GM12878 (cell line): ENCODE measurements at regions of chrX and their contacts with region 1.

Region 1: DNA sequence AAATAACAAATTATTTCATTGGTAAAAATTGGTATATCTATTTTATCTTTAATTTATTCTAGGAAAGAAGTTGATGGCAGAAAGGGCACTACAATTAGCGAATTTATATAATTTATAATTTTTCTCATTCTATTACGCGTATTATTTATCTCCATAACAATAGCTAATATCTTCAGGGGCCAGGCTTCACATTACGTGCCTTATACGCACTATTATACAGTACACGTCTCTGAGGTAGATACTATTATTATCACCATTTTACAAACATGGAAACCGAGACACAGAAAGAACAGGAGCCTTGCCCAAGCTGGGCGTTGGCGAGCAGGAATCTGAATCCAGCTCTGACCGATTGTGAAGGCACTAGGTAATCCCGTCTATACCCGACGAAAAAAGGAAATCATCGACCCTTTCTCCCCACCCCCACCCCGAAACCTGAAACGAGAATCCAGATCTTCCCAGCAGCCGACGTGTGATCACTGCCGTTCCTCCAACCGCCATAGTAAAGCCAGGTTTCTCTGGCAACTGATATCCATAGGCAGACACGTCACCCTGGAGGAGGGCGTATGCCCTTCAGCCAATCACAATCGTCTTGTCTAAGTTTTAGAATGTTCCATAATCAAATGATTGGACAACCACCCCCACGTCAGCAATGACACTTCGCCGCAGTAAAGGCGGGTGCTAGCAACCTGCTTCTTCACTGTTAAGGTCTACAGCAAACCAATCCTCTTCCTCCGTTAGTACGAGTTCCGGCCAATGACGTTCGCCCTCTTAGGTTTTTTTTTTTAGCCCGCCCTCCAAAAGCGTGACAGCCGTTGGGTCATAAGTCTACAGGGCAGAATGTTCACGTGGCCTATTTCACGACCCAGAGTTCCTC is at the start of gene MORF4L2:
- DNase-seq: peak; percentile 95
- ATAC-seq: peak; percentile 91
- H3K4me3 ChIP-seq: peak within 1 kb of the TSS; percentile 73
- H3K27ac ChIP-seq: peak within 1 kb of the TSS; percentile 91
- H3K4me1 ChIP-seq: no peaks in the 10 kb centered on the region
- H3K27me3 ChIP-seq: no peaks in the 10 kb centered on the region
- CTCF ChIP-seq: no peak
- EP300 ChIP-seq: no peak
- POLR2A ChIP-seq: peak; percentile 92
- RAD21 ChIP-seq: no peak
- polyA plus RNA-seq, gene MORF4L2: 118 to 235 TPM

Region 2: GRCh38 chrX:103533511-103534216 is 152.8 kb before region 1 on chrX:
- CTCF ChIA-PET with region 1: interaction called, 8 read pairs
- POLR2A ChIA-PET with region 1: no interaction called
- RAD21 ChIA-PET with region 1: no interaction called
- SMC1A ChIA-PET with region 1: interaction called, 4 read pairs
- in situ Hi-C with region 1: no loop called
- intact Hi-C with region 1: loop called (anchors 1 kb)
- DNase-seq: peak; percentile 21
- ATAC-seq: peak; percentile 82
- H3K4me3 ChIP-seq: no peak overlapping the region
- H3K27ac ChIP-seq: no peak overlapping the region
- H3K4me1 ChIP-seq: no peaks in the 10 kb centered on the region
- H3K27me3 ChIP-seq: no peaks in the 10 kb centered on the region
- CTCF ChIP-seq: peak; percentile 67 to 89 (median 82)
- EP300 ChIP-seq: no peak
- POLR2A ChIP-seq: no peak
- RAD21 ChIP-seq: peak; percentile 86

Region 3: GRCh38 chrX:103629318-103630170 is 56.9 kb before region 1 on chrX:
- CTCF ChIA-PET with region 1: interaction called, 4 read pairs
- POLR2A ChIA-PET with region 1: interaction called, 4 read pairs
- RAD21 ChIA-PET with region 1: no interaction called
- SMC1A ChIA-PET with region 1: interaction called, 3 read pairs
- in situ Hi-C with region 1: no loop called
- intact Hi-C with region 1: loop called (anchors 1 kb)
- DNase-seq: no peak
- ATAC-seq: peak; percentile 75
- H3K4me3 ChIP-seq: peak overlapping the region; percentile 60
- H3K27ac ChIP-seq: peak overlapping the region; percentile 16
- H3K4me1 ChIP-seq: no peaks in the 10 kb centered on the region
- H3K27me3 ChIP-seq: no peaks in the 10 kb centered on the region
- CTCF ChIP-seq: peak in 2 of 3 experiments; percentile 15 to 39; a peak in 2 of 6 replicates
- EP300 ChIP-seq: no peak
- POLR2A ChIP-seq: peak; percentile 51; the same call in 1 of the 2 replicates
- RAD21 ChIP-seq: peak; percentile 32; the same call in 1 of the 2 replicates

Region 4: GRCh38 chrX:103711533-103712369 is 25.3 kb after region 1 on chrX:
- CTCF ChIA-PET with region 1: interaction called, 25 read pairs
- POLR2A ChIA-PET with region 1: no interaction called
- RAD21 ChIA-PET with region 1: no interaction called
- SMC1A ChIA-PET with region 1: interaction called, 7 read pairs
- in situ Hi-C with region 1: no loop called
- intact Hi-C with region 1: no loop called
- DNase-seq: no peak
- ATAC-seq: peak; percentile 82
- H3K4me3 ChIP-seq: no peak overlapping the region
- H3K27ac ChIP-seq: no peak overlapping the region
- H3K4me1 ChIP-seq: no peaks in the 10 kb centered on the region
- H3K27me3 ChIP-seq: no peaks in the 10 kb centered on the region
- CTCF ChIP-seq: peak; percentile 61 to 76 (median 72)
- EP300 ChIP-seq: no peak
- POLR2A ChIP-seq: no peak
- RAD21 ChIP-seq: peak; percentile 50

Region 5: GRCh38 chrX:103817502-103817901 is 131.1 kb after region 1 on chrX:
- CTCF ChIA-PET with region 1: interaction called, 7 read pairs
- POLR2A ChIA-PET with region 1: no interaction called
- RAD21 ChIA-PET with region 1: no interaction called
- SMC1A ChIA-PET with region 1: no interaction called
- in situ Hi-C with region 1: no loop called
- intact Hi-C with region 1: loop called (anchors 1 kb)
- DNase-seq: peak; percentile 11
- ATAC-seq: peak; percentile 82
- H3K4me3 ChIP-seq: no peak overlapping the region
- H3K27ac ChIP-seq: no peak overlapping the region
- H3K4me1 ChIP-seq: no peaks in the 10 kb centered on the region
- H3K27me3 ChIP-seq: no peaks in the 10 kb centered on the region
- CTCF ChIP-seq: peak; percentile 45 to 60 (median 55); a peak in 5 of 6 replicates
- EP300 ChIP-seq: no peak
- POLR2A ChIP-seq: no peak
- RAD21 ChIP-seq: peak; percentile 58

Region 6: DNA sequence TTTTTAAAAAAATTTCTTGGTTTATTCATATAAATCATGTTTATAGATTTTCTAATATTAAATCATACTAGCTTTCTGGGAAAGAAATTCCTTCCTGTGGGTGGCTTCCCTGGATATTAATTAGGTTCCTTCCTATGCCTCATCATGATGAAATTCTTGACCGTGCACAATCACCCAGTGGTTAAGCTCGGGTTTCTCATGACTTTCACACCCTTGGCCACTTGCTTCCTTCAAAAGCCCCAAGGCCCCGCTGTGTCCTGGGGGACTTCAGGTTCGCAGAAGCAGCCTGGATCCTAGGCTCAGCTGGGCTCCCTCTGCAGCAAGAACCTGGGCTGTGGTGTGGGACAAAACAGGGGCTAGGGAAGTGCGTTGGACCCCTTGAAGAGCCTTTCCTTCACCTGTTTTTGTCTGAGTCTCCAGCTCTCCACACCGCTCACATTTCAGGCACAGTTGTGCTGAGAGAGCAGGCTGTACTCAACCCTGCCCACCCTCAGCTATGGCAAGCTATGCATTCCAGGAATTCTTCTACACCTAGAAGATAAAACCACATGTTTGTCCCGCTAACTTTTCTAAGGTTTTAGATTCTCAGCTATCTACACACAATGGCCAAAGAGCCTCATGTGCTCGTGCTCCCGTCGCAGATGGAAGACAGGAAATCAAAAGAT is 227.1 kb after region 1 on chrX:
- CTCF ChIA-PET with region 1: no interaction called
- POLR2A ChIA-PET with region 1: no interaction called
- RAD21 ChIA-PET with region 1: no interaction called
- SMC1A ChIA-PET with region 1: no interaction called
- in situ Hi-C with region 1: no loop called
- intact Hi-C with region 1: no loop called
- DNase-seq: no peak
- ATAC-seq: no peak
- H3K4me3 ChIP-seq: no peak overlapping the region
- H3K27ac ChIP-seq: no peak overlapping the region
- H3K4me1 ChIP-seq: no peaks in the 10 kb centered on the region
- H3K27me3 ChIP-seq: no peaks in the 10 kb centered on the region
- CTCF ChIP-seq: no peak
- EP300 ChIP-seq: no peak
- POLR2A ChIP-seq: no peak
- RAD21 ChIP-seq: no peak

Region 7: GRCh38 chrX:104113222-104113965 is 427.0 kb after region 1 on chrX:
- CTCF ChIA-PET with region 1: no interaction called
- POLR2A ChIA-PET with region 1: no interaction called
- RAD21 ChIA-PET with region 1: no interaction called
- SMC1A ChIA-PET with region 1: no interaction called
- in situ Hi-C with region 1: no loop called
- intact Hi-C with region 1: loop called (anchors 5 kb)
- DNase-seq: no peak
- ATAC-seq: peak; percentile 72
- H3K4me3 ChIP-seq: peak overlapping the region; percentile 61; the same call in 1 of the 2 replicates
- H3K27ac ChIP-seq: no peak overlapping the region
- H3K4me1 ChIP-seq: no peaks in the 10 kb centered on the region
- H3K27me3 ChIP-seq: no peaks in the 10 kb centered on the region
- CTCF ChIP-seq: peak; percentile 47 to 55 (median 52); a peak in 5 of 6 replicates
- EP300 ChIP-seq: no peak
- POLR2A ChIP-seq: no peak
- RAD21 ChIP-seq: peak; percentile 51

Region 8: GRCh38 chrX:104156630-104157529 is 470.4 kb after region 1 on chrX and contains the start of gene SLC25A53:
- CTCF ChIA-PET with region 1: no interaction called
- POLR2A ChIA-PET with region 1: no interaction called
- RAD21 ChIA-PET with region 1: no interaction called
- SMC1A ChIA-PET with region 1: no interaction called
- in situ Hi-C with region 1: loop called (anchors 10 kb)
- intact Hi-C with region 1: no loop called
- DNase-seq: peak; percentile 69
- ATAC-seq: peak; percentile 95
- H3K4me3 ChIP-seq: peak within 1 kb of the TSS; percentile 60
- H3K27ac ChIP-seq: peak within 1 kb of the TSS; percentile 77
- H3K4me1 ChIP-seq: no peaks in the 10 kb centered on the region
- H3K27me3 ChIP-seq: no peaks in the 10 kb centered on the region
- CTCF ChIP-seq: no peak
- EP300 ChIP-seq: no peak
- POLR2A ChIP-seq: peak; percentile 80; the same call in 1 of the 2 replicates
- RAD21 ChIP-seq: no peak
- polyA plus RNA-seq, gene SLC25A53: 4.1 to 5.0 TPM